IMR-90 (cell line): ENCODE measurements at regions of chr20 and their contacts with region 1.

Region 1: DNA sequence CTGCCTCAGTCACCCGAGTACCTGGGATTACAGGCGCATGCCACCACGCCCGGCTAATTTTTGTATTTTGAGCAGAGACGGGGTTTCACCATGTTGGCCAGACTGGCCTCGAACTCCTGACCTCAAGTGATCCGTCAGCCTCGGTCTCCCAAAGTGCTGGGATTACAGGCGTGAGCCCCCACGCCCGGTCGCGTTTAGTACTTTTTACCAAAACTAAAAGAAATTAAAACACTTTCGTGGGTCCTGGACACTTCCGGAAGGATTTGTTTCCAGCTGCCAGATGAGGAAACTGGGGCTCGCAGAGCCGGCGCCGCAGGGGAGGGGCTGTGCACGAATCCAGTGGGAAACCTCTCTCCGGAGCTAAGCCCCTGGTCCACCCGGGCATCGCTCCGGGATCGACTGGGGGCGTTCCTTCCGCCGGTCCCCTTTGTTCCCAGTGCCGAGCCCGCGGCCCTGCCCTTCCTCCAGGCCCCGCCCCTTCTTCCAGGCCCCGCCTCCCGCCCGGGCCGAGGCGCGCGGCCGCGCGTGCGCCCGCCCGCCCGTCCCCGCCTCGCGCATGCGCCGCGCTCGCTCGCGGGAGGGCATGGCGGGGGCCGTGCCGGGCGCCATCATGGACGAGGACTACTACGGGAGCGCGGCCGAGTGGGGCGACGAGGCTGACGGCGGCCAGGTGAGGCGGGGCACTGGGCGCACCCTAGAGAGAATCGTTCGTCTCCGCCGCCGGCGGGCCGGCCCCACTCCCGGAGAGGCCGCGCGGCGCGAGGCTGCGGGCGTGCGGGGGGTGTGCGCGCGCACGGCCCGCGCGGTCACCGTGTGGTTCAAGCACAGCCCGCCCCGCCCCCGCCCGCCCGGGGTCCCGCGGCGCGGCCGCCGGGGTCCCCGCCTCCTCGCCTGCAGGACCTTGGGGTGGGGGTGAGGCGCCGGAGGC is at the start of gene NELFCD:
- DNase-seq: peak; percentile 73
- ATAC-seq: peak; percentile 96
- H3K4me3 ChIP-seq: peak within 1 kb of the TSS; percentile 90
- H3K27ac ChIP-seq: peak within 1 kb of the TSS; percentile 83
- H3K4me1 ChIP-seq: peaks cover 3% of the 10 kb centered on the region; the same call in 1 of the 2 replicates
- H3K27me3 ChIP-seq: peaks cover 3% of the 10 kb centered on the region
- CTCF ChIP-seq: no peak
- POLR2A ChIP-seq: peak; percentile 60
- RAD21 ChIP-seq: no peak
- total RNA-seq, gene NELFCD: 82.2 and 94.1 TPM in 2 replicates

Region 2: GRCh38 chr20:58160451-58161061 is 820.4 kb before region 1 on chr20:
- CTCF ChIA-PET with region 1: no interaction called
- POLR2A ChIA-PET with region 1: no interaction called
- dilution Hi-C with region 1: no loop called
- in situ Hi-C with region 1: no loop called
- intact Hi-C with region 1: no loop called
- DNase-seq: peak; percentile 17
- ATAC-seq: peak; percentile 81
- H3K4me3 ChIP-seq: no peak overlapping the region
- H3K27ac ChIP-seq: no peak overlapping the region
- H3K4me1 ChIP-seq: no peaks in the 10 kb centered on the region; the same call in 1 of the 2 replicates
- H3K27me3 ChIP-seq: peaks cover 1% of the 10 kb centered on the region; the same call in 1 of the 2 replicates
- CTCF ChIP-seq: no peak
- POLR2A ChIP-seq: no peak
- RAD21 ChIP-seq: no peak

Region 3: GRCh38 chr20:58650776-58651558 is 330.0 kb before region 1 on chr20 and contains the start of gene STX16:
- CTCF ChIA-PET with region 1: no interaction called
- POLR2A ChIA-PET with region 1: no interaction called
- dilution Hi-C with region 1: no loop called
- in situ Hi-C with region 1: no loop called
- intact Hi-C with region 1: no loop called
- DNase-seq: peak; percentile 91
- ATAC-seq: peak; percentile 89
- H3K4me3 ChIP-seq: peak within 1 kb of the TSS; percentile 78
- H3K27ac ChIP-seq: peak within 1 kb of the TSS; percentile 90
- H3K4me1 ChIP-seq: peaks cover 8% of the 10 kb centered on the region
- H3K27me3 ChIP-seq: no peaks in the 10 kb centered on the region
- CTCF ChIP-seq: peak; percentile 53
- POLR2A ChIP-seq: peak; percentile 72; the same call in 1 of the 2 replicates
- RAD21 ChIP-seq: peak; percentile 48
- total RNA-seq, gene STX16: 26.9 and 29.4 TPM in 2 replicates

Region 4: DNA sequence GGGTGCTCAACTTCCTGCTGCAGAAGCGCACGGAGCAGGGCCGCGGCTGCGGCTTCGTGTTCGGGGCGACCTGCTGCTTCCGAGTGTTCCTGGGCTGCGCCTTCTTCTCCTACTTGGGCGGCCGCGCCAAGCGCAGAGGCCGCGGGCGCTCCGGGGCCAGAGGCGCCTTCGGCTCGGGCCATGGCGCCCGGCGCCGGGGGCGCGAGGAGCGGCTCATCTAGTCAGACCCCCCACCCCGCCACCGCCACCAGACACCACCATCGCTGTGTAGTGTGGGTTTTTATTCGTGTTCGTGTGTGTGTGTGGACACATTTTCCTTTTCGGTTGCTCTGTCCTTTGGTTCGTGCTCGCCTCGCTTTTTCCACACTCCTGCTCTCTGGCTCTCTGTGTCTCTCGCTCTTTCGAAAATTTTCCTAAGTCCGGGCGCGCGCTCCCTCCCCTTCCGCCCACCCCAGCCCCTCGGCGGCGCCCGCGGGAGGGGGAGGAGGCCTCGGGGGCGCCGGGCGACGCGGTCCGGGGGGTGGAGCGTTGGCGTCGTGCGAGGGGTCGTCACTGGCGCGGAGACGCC is 90.4 kb before region 1 on chr20:
- CTCF ChIA-PET with region 1: no interaction called
- POLR2A ChIA-PET with region 1: no interaction called
- dilution Hi-C with region 1: no loop called
- in situ Hi-C with region 1: no loop called
- intact Hi-C with region 1: loop called (anchors 1 kb)
- DNase-seq: peak; percentile 77
- ATAC-seq: peak; percentile 64
- H3K4me3 ChIP-seq: peak overlapping the region; percentile 100
- H3K27ac ChIP-seq: peak overlapping the region; percentile 91
- H3K4me1 ChIP-seq: peaks cover 3% of the 10 kb centered on the region
- H3K27me3 ChIP-seq: peaks cover 2% of the 10 kb centered on the region; the same call in 1 of the 2 replicates
- CTCF ChIP-seq: no peak
- POLR2A ChIP-seq: 0 out of 2 replicates have a peak, but pooled peaks have one; percentile 12
- RAD21 ChIP-seq: no peak

Region 5: DNA sequence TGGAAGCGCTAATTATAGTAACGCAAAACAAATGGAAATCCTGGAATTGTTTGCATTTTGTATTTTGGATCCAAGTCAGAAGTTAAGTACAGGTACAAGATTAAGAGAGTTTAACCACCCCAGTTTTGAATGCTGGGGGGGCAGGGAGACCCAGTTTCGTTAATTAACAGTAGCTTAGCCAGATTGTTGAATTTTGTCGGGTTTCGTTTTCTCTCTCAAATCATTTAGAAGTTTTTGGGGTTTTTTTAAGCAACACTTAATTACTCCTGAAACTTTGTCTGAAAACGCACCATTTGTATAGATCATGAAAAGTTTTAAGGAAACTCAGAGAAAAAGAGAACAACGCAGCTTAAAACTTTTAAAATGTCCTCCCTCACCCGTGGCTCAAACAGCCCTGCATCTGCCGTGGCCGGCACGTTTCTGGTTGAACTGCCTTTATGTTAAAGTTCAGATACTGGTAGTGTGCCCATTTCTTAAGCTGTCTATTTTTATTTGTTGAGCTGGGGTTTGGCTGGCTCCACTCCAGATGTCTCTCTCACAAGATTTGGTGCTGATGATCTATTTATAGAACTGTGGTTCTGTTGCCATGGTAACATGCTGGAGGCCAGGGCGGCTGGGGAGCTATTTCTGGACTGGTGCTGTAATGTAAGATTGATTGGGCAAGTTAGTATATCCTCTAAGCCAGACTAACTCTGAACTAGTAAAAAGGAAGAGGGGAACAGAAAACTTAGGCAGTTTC is 73.4 kb before region 1 on chr20:
- CTCF ChIA-PET with region 1: no interaction called
- POLR2A ChIA-PET with region 1: no interaction called
- dilution Hi-C with region 1: no loop called
- in situ Hi-C with region 1: loop called (anchors 5 kb)
- intact Hi-C with region 1: loop called (anchors 5 kb)
- DNase-seq: peak; percentile 99
- ATAC-seq: peak; percentile 74
- H3K4me3 ChIP-seq: no peak overlapping the region
- H3K27ac ChIP-seq: no peak overlapping the region
- H3K4me1 ChIP-seq: peaks cover 12% of the 10 kb centered on the region
- H3K27me3 ChIP-seq: no peaks in the 10 kb centered on the region
- CTCF ChIP-seq: no peak
- POLR2A ChIP-seq: peak; percentile 68
- RAD21 ChIP-seq: no peak

Region 6: DNA sequence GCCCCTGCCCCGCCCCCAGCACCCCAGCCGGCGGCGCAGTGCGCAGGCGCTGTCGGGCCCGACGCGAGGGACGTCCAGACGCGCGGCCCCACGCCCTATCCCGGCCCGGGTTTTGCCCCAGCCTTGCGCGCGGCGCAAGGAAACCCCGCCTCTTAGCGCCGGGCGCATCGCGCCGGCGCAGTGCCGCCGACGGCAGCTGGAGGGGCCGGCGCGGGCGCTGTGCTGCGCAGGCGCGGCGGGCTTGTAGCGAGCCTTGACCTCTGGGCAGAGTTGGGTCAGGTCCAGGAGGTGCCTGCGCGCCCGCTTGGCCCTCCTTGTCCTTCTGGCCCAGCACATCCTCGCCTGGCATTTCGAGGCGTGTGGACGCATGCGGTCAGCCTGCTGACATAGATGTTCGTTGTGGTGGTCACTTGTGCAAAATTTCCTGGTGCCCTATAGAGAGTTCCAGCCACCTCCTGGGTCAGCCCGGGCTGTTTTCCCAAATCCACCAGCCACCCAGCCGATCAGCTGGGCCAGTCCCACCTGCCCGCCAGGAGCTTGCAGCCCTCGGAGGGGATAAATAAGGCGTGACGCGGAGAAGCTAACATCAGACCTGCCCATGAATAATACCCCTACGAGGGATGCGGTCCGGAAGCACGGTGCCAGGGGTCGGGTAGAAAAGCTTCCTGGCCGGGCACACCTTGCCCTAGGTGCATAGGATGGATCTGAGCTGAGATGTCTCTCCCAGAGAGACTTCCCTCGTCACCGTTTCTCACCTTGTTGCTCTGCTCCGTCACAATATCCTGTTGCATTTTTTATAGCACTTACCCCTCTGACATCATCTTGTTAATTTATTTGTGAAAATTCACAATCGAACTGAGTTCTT is 62.1 kb after region 1 on chr20:
- CTCF ChIA-PET with region 1: no interaction called
- POLR2A ChIA-PET with region 1: no interaction called
- dilution Hi-C with region 1: no loop called
- in situ Hi-C with region 1: no loop called
- intact Hi-C with region 1: no loop called
- DNase-seq: peak; percentile 85
- ATAC-seq: peak; percentile 99
- H3K4me3 ChIP-seq: peak overlapping the region; percentile 91
- H3K27ac ChIP-seq: peak overlapping the region; percentile 90
- H3K4me1 ChIP-seq: peaks cover 8% of the 10 kb centered on the region
- H3K27me3 ChIP-seq: no peaks in the 10 kb centered on the region
- CTCF ChIP-seq: 0 out of 2 replicates have a peak, but pooled peaks have one; percentile 7
- POLR2A ChIP-seq: no peak
- RAD21 ChIP-seq: no peak